PC-9 (cell line): ENCODE measurements at regions of chr11 and their contacts with region 1.

Region 1: DNA sequence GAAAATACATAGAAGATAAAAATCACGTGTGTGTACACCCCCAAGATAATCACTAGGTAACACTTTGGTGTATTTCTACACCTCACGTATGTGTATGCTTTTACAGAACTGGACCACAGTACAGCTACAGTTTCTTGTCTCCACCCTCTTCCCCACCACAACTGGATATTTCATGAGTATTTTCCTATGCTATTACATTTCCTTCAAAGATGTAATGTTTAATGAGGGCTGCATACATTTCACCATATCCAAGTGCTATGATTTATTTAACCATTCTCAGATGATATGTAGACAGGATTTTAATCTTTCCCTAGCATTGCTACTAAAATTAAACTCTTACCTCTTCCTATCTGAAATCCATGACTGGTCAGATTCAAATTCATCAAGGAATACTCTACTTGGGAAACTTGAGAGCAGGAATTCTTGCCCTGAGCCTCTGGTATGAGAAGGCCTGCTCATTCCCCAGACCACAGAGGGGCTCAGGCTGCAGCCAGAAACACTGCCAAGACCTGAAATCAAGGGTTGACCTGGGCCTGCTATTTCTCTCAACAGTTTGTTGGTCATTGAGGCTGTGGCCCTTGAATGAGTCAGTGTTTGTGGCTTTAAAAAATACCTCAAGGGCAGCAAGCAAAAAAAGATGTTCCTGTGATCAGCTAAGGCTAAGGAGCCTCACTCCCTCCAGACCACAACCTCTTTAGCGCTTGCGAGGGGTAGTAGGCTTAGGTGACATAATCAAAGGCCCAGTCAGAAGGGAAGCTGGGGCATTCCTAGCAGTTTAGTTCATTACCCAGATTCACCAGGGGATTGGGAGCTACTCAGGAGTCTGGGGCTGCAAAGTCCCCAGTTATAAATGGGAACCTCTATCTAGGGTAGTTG is 55.5 kb downstream of the ABTB2 start:
- DNase-seq: peak; percentile 77 to 98
- H3K4me3 ChIP-seq: no peak overlapping the region
- H3K27ac ChIP-seq: peak overlapping the region; percentile 61
- H3K4me1 ChIP-seq: peaks cover 90% of the 10 kb centered on the region
- H3K27me3 ChIP-seq: no peaks in the 10 kb centered on the region
- CTCF ChIP-seq: no peak

Region 2: GRCh38 chr11:34174412-34175041 is 127.8 kb before region 1 on chr11:
- CTCF ChIA-PET with region 1: interaction called, 11 read pairs
- POLR2A ChIA-PET with region 1: no interaction called
- intact Hi-C with region 1: loop called (anchors 2 kb)
- DNase-seq: peak; percentile 53 to 85
- H3K4me3 ChIP-seq: peak overlapping the region; percentile 40; the same call in 1 of the 2 replicates
- H3K27ac ChIP-seq: no peak overlapping the region
- H3K4me1 ChIP-seq: peaks cover 8% of the 10 kb centered on the region
- H3K27me3 ChIP-seq: no peaks in the 10 kb centered on the region
- CTCF ChIP-seq: peak; percentile 92

Region 3: DNA sequence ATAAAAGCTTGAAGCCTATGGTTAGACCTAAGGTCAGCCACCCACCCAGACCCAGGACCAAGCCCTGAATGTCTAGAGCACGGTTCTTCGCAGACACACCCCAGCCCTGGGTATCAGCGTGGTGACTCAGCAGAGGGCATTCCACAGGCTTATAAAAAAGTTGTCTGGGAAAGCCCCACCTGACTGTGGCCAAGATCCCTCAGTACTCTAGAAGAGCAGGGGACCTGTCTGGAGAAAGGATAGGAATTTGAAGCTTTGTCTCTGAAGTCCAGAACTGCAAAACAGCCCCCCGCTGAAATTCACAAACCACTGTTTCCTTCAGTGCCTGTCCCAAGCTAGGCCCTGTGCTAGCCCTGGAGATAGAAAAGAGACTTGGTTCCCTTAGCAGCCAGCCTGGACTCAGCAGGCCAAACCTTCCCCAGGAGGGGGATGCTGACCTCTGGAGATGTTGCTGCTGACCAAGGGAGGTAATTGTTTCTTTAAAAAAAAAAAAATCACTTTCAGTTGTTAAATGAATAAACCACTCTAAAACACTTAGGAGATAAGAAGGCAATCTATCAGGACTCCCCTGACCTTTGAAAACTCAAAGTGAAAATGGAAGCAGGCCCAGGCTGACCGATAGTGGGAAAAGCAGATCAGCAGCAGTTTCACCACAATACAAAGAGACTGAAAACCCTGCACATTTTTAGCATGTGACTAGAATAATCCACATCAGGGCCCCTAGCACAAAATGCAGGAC is 58.4 kb before region 1 on chr11:
- CTCF ChIA-PET with region 1: no interaction called
- POLR2A ChIA-PET with region 1: interaction called, 4 read pairs
- intact Hi-C with region 1: loop called (anchors 1 kb)
- DNase-seq: peak; percentile 90 to 95
- H3K4me3 ChIP-seq: no peak overlapping the region
- H3K27ac ChIP-seq: peak overlapping the region; percentile 76
- H3K4me1 ChIP-seq: peaks cover 64% of the 10 kb centered on the region
- H3K27me3 ChIP-seq: no peaks in the 10 kb centered on the region
- CTCF ChIP-seq: no peak

Region 4: DNA sequence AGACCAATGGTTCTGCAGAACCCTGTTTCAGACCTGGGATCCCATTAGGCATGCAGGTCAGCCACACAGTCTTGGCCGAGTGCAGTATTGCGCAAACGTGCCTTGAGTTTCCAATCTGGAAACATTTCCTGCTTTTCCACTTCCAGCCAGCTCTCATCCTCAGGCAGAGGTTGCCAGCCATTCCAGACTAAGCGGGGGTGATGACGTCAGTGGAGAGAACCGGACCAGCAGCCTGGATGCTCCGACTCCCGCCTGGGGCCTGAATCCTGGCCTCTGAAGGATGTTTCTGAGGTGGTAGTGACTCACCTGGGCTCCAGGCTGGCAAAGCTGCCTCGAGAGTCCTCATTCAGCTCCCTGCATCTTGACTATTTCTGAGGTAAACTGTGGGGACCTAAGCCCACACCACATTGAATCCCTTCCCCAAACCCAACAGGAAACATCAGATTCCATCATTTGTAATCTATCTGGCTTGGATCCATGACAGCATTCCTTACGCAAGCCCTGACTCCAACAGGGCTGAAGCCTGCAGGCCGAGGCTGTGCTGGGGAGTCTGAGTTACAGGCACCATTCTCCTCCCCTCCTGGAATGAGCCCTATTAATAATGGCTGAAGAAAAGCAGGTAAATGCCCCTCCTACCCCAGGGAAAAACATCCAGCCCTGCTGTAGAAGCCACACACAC is 27.4 kb before region 1 on chr11:
- CTCF ChIA-PET with region 1: interaction called, 5 read pairs
- POLR2A ChIA-PET with region 1: no interaction called
- intact Hi-C with region 1: loop called (anchors 1 kb)
- DNase-seq: peak; percentile 99 to 100
- H3K4me3 ChIP-seq: peak overlapping the region; percentile 2; the same call in 1 of the 2 replicates
- H3K27ac ChIP-seq: peak overlapping the region; percentile 77
- H3K4me1 ChIP-seq: peaks cover 34% of the 10 kb centered on the region
- H3K27me3 ChIP-seq: no peaks in the 10 kb centered on the region
- CTCF ChIP-seq: no peak

Region 5: GRCh38 chr11:34331329-34331728 is 29.0 kb after region 1 on chr11:
- CTCF ChIA-PET with region 1: no interaction called
- POLR2A ChIA-PET with region 1: interaction called, 6 read pairs
- intact Hi-C with region 1: loop called (anchors 1 kb)
- DNase-seq: peak in 1 of 2 experiments; percentile 76
- H3K4me3 ChIP-seq: peak overlapping the region; percentile 42; the same call in 1 of the 2 replicates
- H3K27ac ChIP-seq: peak overlapping the region; percentile 80
- H3K4me1 ChIP-seq: peaks cover 75% of the 10 kb centered on the region
- H3K27me3 ChIP-seq: no peaks in the 10 kb centered on the region
- CTCF ChIP-seq: no peak

Region 6: DNA sequence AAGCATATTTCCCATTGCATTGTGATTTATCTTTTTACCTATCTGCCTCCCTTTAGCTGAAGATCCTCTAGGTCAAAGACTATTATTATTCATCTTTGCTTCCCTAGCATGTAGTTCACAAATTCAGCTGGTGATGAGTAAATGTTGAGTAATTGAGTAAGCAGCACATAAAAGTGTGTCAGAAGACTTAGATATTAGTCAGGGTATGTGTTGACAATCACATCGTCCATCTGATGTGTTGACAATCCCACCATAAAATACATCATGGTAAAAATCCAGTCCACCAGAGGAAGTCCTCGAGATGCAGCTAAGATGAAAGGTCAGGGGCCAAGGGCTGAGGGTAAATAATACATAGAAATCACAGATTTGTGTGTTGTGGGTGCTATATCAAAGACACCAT is 78.4 kb after region 1 on chr11:
- CTCF ChIA-PET with region 1: no interaction called
- POLR2A ChIA-PET with region 1: interaction called, 10 read pairs
- intact Hi-C with region 1: no loop called
- DNase-seq: peak in 1 of 2 experiments; percentile 85
- H3K4me3 ChIP-seq: no peak overlapping the region
- H3K27ac ChIP-seq: peak overlapping the region; percentile 73; the same call in 1 of the 2 replicates
- H3K4me1 ChIP-seq: peaks cover 36% of the 10 kb centered on the region
- H3K27me3 ChIP-seq: no peaks in the 10 kb centered on the region
- CTCF ChIP-seq: no peak